A549 (cell line): ENCODE measurements at regions of chr18 and their contacts with region 1.

Region 1: GRCh38 chr18:47756364-47757016 is 174.0 kb downstream of the SMAD2 start:
- DNase-seq: peak; percentile 31 to 64
- ATAC-seq: peak; percentile 72 to 88
- H3K4me3 ChIP-seq: no peak overlapping the region
- H3K27ac ChIP-seq: no peak overlapping the region
- H3K4me1 ChIP-seq: no peaks in the 10 kb centered on the region
- CTCF ChIP-seq: peak; percentile 58
- EP300 ChIP-seq: no peak
- POLR2A ChIP-seq: no peak
- RAD21 ChIP-seq: peak; percentile 46 to 67; a peak in 4 of 5 replicates

Region 2: GRCh38 chr18:47215554-47216138 is 540.8 kb before region 1 on chr18:
- CTCF ChIA-PET with region 1: interaction called, 15 read pairs
- POLR2A ChIA-PET with region 1: no interaction called
- DNase-seq: peak; percentile 11 to 64
- ATAC-seq: peak; percentile 74 to 80; a peak in 4 of 6 replicates
- H3K4me3 ChIP-seq: no peak overlapping the region
- H3K27ac ChIP-seq: no peak overlapping the region
- H3K4me1 ChIP-seq: no peaks in the 10 kb centered on the region
- CTCF ChIP-seq: peak; percentile 53
- EP300 ChIP-seq: no peak
- POLR2A ChIP-seq: no peak
- RAD21 ChIP-seq: peak; percentile 70 to 75

Region 3: GRCh38 chr18:47767699-47768098 is 11.2 kb after region 1 on chr18:
- CTCF ChIA-PET with region 1: interaction called, 13 read pairs
- POLR2A ChIA-PET with region 1: no interaction called
- DNase-seq: no peak
- ATAC-seq: no peak
- H3K4me3 ChIP-seq: no peak overlapping the region
- H3K27ac ChIP-seq: no peak overlapping the region
- H3K4me1 ChIP-seq: no peaks in the 10 kb centered on the region
- CTCF ChIP-seq: no peak
- EP300 ChIP-seq: no peak
- POLR2A ChIP-seq: no peak
- RAD21 ChIP-seq: no peak